Naive thymus-derived CD4-positive, alpha-beta T cell (primary cell): ENCODE measurements at regions of chr1 and their contacts with region 1.

Region 1: GRCh38 chr1:58941471-58942289 is 157.8 kb upstream of the JUN start:
- DNase-seq: peak in 6 of 9 donors; percentile 33 to 65 (median 57)
- ATAC-seq: peak; percentile 83
- H3K4me3 ChIP-seq: peak overlapping the region; percentile 40
- H3K4me3 Mint-ChIP-seq: peak overlapping the region; percentile 60 to 88 (median 80)
- H3K27ac ChIP-seq: peak overlapping the region; percentile 39
- H3K27ac Mint-ChIP-seq: peak overlapping the region; percentile 37 to 89 (median 77)
- H3K4me1 ChIP-seq: peaks cover 48 to 61% of the 10 kb centered on the region in 2 donors
- H3K4me1 Mint-ChIP-seq: peaks cover 60 to 87% (median 74%) of the 10 kb centered on the region in 7 donors
- H3K27me3 ChIP-seq: no peaks in the 10 kb centered on the region
- H3K27me3 Mint-ChIP-seq: no peaks in the 10 kb centered on the region

Region 2: DNA sequence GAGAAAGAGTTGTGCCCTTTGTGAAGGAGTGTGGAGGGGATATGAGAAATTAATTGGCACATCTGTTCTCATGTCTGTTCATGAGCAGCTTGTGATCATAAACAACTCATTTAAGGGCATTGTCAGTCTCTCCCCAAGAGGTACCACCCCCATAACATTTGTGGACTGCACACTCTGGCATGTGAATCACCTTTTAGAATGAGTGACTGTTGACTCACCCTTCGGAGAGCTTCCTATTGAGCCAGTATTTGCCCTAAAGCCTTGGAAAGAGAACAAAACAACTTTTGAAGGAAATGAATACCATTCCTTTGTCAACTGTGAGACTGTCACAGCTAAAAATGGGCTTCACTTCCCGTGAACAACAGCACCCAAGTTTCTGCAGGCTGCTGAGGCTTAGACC is 214.3 kb before region 1 on chr1:
- CTCF ChIA-PET with region 1: no interaction called
- POLR2A ChIA-PET with region 1: no interaction called
- intact Hi-C with region 1: no loop called
- DNase-seq: no peak
- ATAC-seq: no peak
- H3K4me3 ChIP-seq: no peak overlapping the region
- H3K4me3 Mint-ChIP-seq: no peak overlapping the region
- H3K27ac ChIP-seq: no peak overlapping the region
- H3K27ac Mint-ChIP-seq: peak overlapping the region in 2 of 9 donors; percentile 29 to 63
- H3K4me1 ChIP-seq: no peaks in the 10 kb centered on the region
- H3K4me1 Mint-ChIP-seq: peaks cover 0 to 35% (median 0%) of the 10 kb centered on the region in 7 donors
- H3K27me3 ChIP-seq: no peaks in the 10 kb centered on the region
- H3K27me3 Mint-ChIP-seq: no peaks in the 10 kb centered on the region

Region 3: GRCh38 chr1:58764294-58764978 is 177.2 kb before region 1 on chr1:
- CTCF ChIA-PET with region 1: no interaction called
- POLR2A ChIA-PET with region 1: no interaction called
- intact Hi-C with region 1: no loop called
- DNase-seq: no peak
- ATAC-seq: no peak
- H3K4me3 ChIP-seq: no peak overlapping the region
- H3K4me3 Mint-ChIP-seq: no peak overlapping the region
- H3K27ac ChIP-seq: no peak overlapping the region
- H3K27ac Mint-ChIP-seq: no peak overlapping the region
- H3K4me1 ChIP-seq: no peaks in the 10 kb centered on the region
- H3K4me1 Mint-ChIP-seq: peaks cover 0 to 1% (median 0%) of the 10 kb centered on the region in 7 donors
- H3K27me3 ChIP-seq: no peaks in the 10 kb centered on the region
- H3K27me3 Mint-ChIP-seq: peaks cover 0 to 11% (median 8%) of the 10 kb centered on the region in 5 donors

Region 4: DNA sequence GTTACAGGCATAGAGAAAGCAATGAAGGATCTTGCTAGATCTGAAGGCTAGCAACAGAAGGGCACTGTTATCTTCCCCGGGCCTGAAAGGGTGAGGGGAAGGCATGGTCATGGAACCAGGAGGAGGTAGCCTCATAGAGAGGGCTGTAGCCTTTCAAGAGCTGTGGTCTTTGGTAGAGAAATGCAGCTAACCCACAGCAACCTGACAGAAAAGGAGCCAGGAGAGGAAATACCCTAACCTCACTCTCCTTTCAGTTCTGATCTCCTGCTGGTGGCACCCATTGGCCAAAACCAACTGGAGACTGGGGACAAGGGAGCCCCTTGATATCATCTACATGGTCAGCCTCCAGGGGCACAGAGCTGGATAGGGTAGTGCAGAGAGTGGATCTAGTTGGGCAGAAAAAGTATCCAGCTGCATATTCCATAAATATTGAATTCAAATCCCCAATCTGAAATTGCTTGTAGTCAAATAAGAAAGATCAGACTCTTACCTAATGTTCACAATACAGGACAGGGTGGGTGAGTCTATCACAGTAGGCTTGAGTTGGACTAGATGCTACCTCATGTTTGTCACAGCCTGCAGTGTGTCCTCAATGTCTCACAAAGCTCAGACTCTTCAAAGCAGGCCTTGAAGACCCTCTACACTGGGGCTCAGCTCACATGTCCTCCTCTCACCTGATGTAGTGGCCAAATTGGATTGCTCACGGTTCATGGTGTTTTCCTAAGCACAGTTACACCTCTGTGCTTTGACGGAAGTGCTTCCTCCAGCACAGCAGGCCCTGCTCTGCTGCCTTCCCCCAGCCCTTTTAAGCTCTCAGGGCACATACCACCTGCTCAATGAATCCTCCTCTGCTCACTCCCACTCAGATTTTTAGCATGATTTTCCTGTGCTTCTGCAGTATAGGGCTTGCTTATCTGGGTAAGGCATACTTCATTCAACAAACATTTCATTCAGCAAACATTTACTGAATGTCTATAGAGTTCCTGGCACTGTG is 83.7 kb before region 1 on chr1:
- CTCF ChIA-PET with region 1: no interaction called
- POLR2A ChIA-PET with region 1: interaction called, 5 read pairs
- intact Hi-C with region 1: loop called in 1 of 2 experiments (anchors 5 kb)
- DNase-seq: peak in 7 of 9 donors; percentile 28 to 61 (median 52)
- ATAC-seq: peak; percentile 76
- H3K4me3 ChIP-seq: no peak overlapping the region
- H3K4me3 Mint-ChIP-seq: peak overlapping the region in 9 of 10 donors; percentile 32 to 83 (median 51)
- H3K27ac ChIP-seq: peak overlapping the region; percentile 65
- H3K27ac Mint-ChIP-seq: peak overlapping the region; percentile 83 to 97 (median 92)
- H3K4me1 ChIP-seq: peaks cover 16 to 34% of the 10 kb centered on the region in 2 donors
- H3K4me1 Mint-ChIP-seq: peaks cover 34 to 64% (median 59%) of the 10 kb centered on the region in 7 donors
- H3K27me3 ChIP-seq: no peaks in the 10 kb centered on the region
- H3K27me3 Mint-ChIP-seq: no peaks in the 10 kb centered on the region

Region 5: GRCh38 chr1:58917436-58917835 is 24.2 kb before region 1 on chr1:
- CTCF ChIA-PET with region 1: no interaction called
- POLR2A ChIA-PET with region 1: no interaction called
- intact Hi-C with region 1: loop called in 1 of 2 experiments (anchors 2 kb)
- DNase-seq: no peak
- ATAC-seq: no peak
- H3K4me3 ChIP-seq: no peak overlapping the region
- H3K4me3 Mint-ChIP-seq: no peak overlapping the region
- H3K27ac ChIP-seq: no peak overlapping the region
- H3K27ac Mint-ChIP-seq: no peak overlapping the region
- H3K4me1 ChIP-seq: peaks cover under 1 to 5% of the 10 kb centered on the region in 2 donors
- H3K4me1 Mint-ChIP-seq: peaks cover 0 to 12% (median 5%) of the 10 kb centered on the region in 7 donors
- H3K27me3 ChIP-seq: no peaks in the 10 kb centered on the region
- H3K27me3 Mint-ChIP-seq: peaks cover 0 to 30% (median 4%) of the 10 kb centered on the region in 5 donors

Region 6: GRCh38 chr1:58979086-58979485 is 37.4 kb after region 1 on chr1:
- CTCF ChIA-PET with region 1: no interaction called
- POLR2A ChIA-PET with region 1: no interaction called
- intact Hi-C with region 1: no loop called
- DNase-seq: no peak
- ATAC-seq: no peak
- H3K4me3 ChIP-seq: no peak overlapping the region
- H3K4me3 Mint-ChIP-seq: peak overlapping the region in 5 of 10 donors; percentile 25 to 69 (median 32)
- H3K27ac ChIP-seq: no peak overlapping the region
- H3K27ac Mint-ChIP-seq: peak overlapping the region in 1 of 9 donors; percentile 81
- H3K4me1 ChIP-seq: peaks cover 0 to 9% of the 10 kb centered on the region in 2 donors
- H3K4me1 Mint-ChIP-seq: peaks cover 9 to 48% (median 20%) of the 10 kb centered on the region in 7 donors
- H3K27me3 ChIP-seq: no peaks in the 10 kb centered on the region
- H3K27me3 Mint-ChIP-seq: no peaks in the 10 kb centered on the region

Region 7: DNA sequence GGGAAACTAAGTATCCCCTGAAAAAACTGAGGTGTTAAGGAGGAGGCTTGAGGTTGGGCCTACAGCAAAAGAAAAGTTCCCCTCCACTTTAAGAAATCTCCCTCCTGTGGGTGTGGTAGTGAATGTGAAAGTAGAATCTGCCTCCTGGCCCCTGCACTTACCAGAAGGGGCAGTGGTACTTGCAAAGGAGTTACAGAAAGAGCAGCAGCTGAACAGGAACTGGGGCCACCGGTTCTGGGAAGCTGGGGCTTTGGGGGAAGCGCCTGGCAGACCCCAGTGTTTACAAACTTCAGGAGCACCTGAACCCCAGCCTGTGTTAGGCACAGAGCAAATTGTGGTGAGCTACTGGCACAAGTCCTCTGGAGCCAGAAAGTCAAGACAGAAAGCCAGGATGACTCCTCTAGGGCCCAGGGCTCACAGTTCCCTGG is 105.1 kb after region 1 on chr1:
- CTCF ChIA-PET with region 1: no interaction called
- POLR2A ChIA-PET with region 1: no interaction called
- intact Hi-C with region 1: loop called in 1 of 2 experiments (anchors 2 kb)
- DNase-seq: peak in 7 of 9 donors; percentile 18 to 49 (median 34)
- ATAC-seq: peak; percentile 84
- H3K4me3 ChIP-seq: no peak overlapping the region
- H3K4me3 Mint-ChIP-seq: peak overlapping the region in 8 of 10 donors; percentile 14 to 82 (median 34)
- H3K27ac ChIP-seq: no peak overlapping the region
- H3K27ac Mint-ChIP-seq: peak overlapping the region; percentile 64 to 96 (median 77)
- H3K4me1 ChIP-seq: peaks cover 30% of the 10 kb centered on the region in 2 donors
- H3K4me1 Mint-ChIP-seq: peaks cover 26 to 65% (median 41%) of the 10 kb centered on the region in 7 donors
- H3K27me3 ChIP-seq: no peaks in the 10 kb centered on the region
- H3K27me3 Mint-ChIP-seq: no peaks in the 10 kb centered on the region

Region 8: DNA sequence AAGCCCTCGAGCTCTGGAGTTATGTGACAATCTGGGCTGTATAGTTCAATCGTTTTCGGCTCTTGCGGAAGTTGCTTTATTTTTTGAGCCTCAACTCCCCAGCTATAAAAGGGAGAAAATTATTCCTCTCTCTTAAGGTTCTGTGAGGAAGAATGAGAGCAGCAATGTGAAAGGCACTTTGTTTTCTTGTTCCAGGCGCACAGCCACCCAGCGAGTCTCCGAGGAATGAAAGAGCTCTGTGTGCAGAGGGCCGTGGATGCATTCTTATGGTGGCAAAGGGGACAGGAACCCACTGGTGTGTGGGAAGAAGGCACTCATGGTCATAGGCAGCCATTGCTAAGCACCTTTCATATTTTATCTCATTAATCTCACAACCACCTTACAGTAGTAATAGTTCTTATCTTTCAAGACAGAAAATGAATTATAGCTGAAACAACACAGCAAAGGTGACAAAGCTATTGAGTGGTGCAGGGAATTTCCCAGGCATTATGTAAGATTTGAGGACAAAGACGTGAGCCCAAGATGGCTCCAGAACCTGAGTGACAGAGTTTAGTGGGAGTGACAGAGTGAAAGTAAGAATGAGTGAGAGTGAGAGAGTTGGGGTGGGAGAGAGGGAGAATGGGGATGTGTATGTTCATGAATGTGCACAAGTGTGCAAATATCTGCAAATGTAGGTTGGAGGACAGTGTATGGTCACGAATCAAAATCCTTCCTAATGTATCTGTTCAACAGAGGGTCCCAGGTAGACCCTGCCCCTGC is 975.5 kb after region 1 on chr1:
- CTCF ChIA-PET with region 1: no interaction called
- POLR2A ChIA-PET with region 1: no interaction called
- intact Hi-C with region 1: no loop called
- DNase-seq: no peak
- ATAC-seq: no peak
- H3K4me3 ChIP-seq: no peak overlapping the region
- H3K4me3 Mint-ChIP-seq: no peak overlapping the region
- H3K27ac ChIP-seq: no peak overlapping the region
- H3K27ac Mint-ChIP-seq: no peak overlapping the region
- H3K4me1 ChIP-seq: no peaks in the 10 kb centered on the region
- H3K4me1 Mint-ChIP-seq: peaks cover 0 to 3% (median 0%) of the 10 kb centered on the region in 7 donors
- H3K27me3 ChIP-seq: no peaks in the 10 kb centered on the region
- H3K27me3 Mint-ChIP-seq: no peaks in the 10 kb centered on the region